Activated naive CD4-positive, alpha-beta T cell treated with anti-CD3 and anti-CD28 coated beads for 36 hours (primary cell): ENCODE measurements at regions of chr16 and their contacts with region 1.

Region 1: DNA sequence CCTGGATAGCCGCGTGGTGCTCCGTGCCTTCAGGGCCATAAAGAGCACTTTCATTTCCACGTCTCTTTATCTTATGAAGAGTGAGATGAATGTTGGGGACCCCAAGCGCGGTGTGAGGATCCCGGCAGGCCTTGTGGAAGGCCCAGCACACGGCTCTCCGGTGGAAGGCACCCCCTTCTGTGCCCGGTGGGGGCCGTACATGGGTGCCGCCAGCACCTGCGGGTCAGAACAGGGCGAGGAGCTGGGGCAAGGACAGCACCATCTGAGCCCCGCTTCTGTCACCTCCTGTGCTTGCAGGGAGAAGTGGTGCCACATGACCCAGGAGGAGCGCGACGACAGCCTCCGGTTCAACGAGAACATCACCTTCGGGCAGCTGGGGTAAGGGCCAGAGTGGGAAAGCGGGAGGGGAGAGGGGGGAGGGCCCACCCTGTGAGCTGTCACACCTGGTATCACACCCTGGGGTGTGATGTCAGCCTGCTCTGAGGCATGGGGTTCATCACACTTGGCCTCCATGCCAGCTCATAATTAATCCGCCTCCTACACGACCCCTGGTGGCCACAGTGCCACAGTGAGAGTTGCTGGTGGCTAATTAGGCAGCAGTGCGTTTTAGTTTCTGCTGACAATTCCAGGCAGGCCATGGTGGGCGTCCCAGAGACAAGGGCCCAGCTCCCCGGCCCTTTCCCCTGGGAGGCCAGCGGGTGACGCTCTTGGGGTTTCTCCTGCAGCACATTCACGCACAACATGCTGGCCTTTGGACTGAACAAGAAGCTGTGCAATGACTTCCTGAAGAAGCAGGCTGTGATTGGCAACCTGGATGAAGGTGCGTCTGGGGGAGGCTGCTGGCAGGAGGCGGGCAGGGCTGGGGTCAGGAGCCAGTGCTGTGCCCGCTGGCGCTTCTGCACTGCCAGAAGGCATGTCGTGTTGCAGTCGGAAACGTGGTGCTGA is 25.7 kb downstream of the CIBAR2 start:
- DNase-seq: peak; percentile 88
- H3K4me3 Mint-ChIP-seq: no peak overlapping the region
- H3K27ac Mint-ChIP-seq: no peak overlapping the region
- H3K4me1 Mint-ChIP-seq: peaks cover 23% of the 10 kb centered on the region
- H3K27me3 Mint-ChIP-seq: no peaks in the 10 kb centered on the region

Region 2: GRCh38 chr16:84985079-84986065 is 101.2 kb before region 1 on chr16:
- CTCF ChIA-PET with region 1: interaction called, 7 read pairs
- intact Hi-C with region 1: loop called (anchors 1 kb)
- DNase-seq: no peak
- H3K4me3 Mint-ChIP-seq: no peak overlapping the region
- H3K27ac Mint-ChIP-seq: peak overlapping the region; percentile 56
- H3K4me1 Mint-ChIP-seq: peaks cover 12% of the 10 kb centered on the region
- H3K27me3 Mint-ChIP-seq: no peaks in the 10 kb centered on the region

Region 3: GRCh38 chr16:85010931-85011845 is 75.4 kb before region 1 on chr16 and contains the start of gene ZDHHC7:
- CTCF ChIA-PET with region 1: interaction called, 16 read pairs
- intact Hi-C with region 1: loop called (anchors 1 kb)
- DNase-seq: peak; percentile 87
- H3K4me3 Mint-ChIP-seq: peak within 1 kb of the TSS; percentile 98
- H3K27ac Mint-ChIP-seq: peak within 1 kb of the TSS; percentile 98
- H3K4me1 Mint-ChIP-seq: peaks cover 31% of the 10 kb centered on the region
- H3K27me3 Mint-ChIP-seq: no peaks in the 10 kb centered on the region
- total RNA-seq, gene ZDHHC7: 16.6 to 17.9 TPM

Region 4: DNA sequence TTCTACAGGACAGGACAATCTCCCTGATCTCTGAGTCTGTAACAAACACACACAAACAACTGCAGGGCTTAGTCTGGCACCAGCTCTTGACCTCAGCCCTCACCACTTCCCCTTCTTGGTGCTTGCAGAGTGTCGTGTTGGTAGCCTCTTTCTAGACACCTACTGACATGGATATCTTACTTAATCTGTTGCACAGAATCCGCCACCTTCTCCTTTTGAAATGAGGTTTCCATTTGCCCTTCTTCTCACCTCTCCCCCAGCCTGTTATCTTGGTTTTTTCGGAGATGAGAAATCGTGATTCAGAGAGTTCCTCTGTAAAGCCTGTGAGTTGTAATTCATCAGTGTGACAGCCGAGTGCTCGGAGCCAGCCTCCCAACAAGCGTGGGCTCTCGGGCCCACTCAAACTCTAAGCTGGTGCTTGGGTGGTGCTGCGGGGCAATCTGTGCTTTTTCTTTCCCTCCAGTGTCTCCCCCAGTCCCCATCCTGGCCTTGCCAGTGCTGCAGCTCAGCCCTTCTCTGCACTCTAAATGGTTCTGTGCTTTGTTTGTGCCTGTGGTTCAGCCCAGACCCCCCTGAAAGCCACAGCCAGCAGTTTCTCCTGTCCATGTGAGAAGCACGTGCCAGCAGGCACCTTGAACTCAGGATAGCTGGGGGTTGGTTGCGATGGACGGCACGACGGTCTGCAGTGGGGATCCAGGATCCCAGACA is 31.0 kb before region 1 on chr16:
- CTCF ChIA-PET with region 1: interaction called, 9 read pairs
- intact Hi-C with region 1: loop called (anchors 1 kb)
- DNase-seq: peak; percentile 77
- H3K4me3 Mint-ChIP-seq: peak overlapping the region; percentile 64
- H3K27ac Mint-ChIP-seq: peak overlapping the region; percentile 84
- H3K4me1 Mint-ChIP-seq: peaks cover 39% of the 10 kb centered on the region
- H3K27me3 Mint-ChIP-seq: no peaks in the 10 kb centered on the region